ENCODE measurements at regions of chr14 and their contacts with region 1.

Region 1: DNA sequence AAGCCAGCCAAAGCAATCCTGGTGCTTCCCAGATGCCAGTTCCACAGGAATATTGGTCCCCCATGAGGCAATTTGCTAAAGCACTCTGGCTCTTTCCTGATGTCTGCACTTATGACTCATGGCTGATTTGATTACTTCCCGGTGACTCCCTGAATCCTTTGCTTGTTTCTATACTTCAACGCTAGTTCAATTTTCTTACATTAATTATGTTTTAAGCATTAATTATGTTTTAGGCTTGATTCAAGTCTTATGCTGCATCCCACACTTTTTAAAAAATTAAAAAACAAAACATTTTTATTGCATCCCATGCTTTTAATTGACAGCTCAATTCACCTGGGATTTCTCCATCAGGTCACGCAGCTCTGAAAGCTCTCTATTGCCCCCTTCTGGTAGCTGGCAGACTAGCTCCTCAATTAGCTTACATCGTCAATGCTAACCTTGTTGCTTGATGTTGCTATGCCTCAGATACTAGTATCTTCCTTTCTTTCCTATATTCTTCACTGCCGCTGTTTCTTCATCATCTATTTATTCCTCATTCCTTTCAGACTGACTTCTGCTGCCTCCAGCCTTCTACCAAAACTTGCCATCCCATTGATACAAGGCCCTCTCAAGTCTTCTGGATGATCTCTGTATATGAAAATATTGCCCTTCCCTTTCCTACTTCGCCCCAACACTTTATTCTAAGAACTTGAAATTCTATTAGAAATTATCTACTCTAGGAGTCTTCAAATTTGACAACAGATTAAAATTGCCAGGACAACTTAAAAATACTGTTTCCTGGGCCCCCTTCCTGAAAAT is 32.0 kb downstream of the TSHR start:
- DNase-seq: peak; percentile 73
- H3K4me3 ChIP-seq: no peak overlapping the region
- H3K27ac ChIP-seq: no peak overlapping the region
- H3K4me1 ChIP-seq: no peaks in the 10 kb centered on the region
- H3K27me3 ChIP-seq: peaks cover 0 to 9% of the 10 kb centered on the region in 2 experiments
- CTCF ChIP-seq: peak; percentile 76 to 89
- POLR2A ChIP-seq: no peak

Region 2: GRCh38 chr14:80862983-80863382 is 124.5 kb before region 1 on chr14:
- CTCF ChIA-PET with region 1: interaction called, 14 read pairs
- POLR2A ChIA-PET with region 1: no interaction called
- dilution Hi-C with region 1: no loop called
- intact Hi-C with region 1: no loop called
- DNase-seq: peak; percentile 12
- H3K4me3 ChIP-seq: no peak overlapping the region
- H3K27ac ChIP-seq: no peak overlapping the region
- H3K4me1 ChIP-seq: no peaks in the 10 kb centered on the region
- H3K27me3 ChIP-seq: no peaks in the 10 kb centered on the region
- CTCF ChIP-seq: peak in 1 of 2 donors; percentile 5
- POLR2A ChIP-seq: no peak

Region 3: DNA sequence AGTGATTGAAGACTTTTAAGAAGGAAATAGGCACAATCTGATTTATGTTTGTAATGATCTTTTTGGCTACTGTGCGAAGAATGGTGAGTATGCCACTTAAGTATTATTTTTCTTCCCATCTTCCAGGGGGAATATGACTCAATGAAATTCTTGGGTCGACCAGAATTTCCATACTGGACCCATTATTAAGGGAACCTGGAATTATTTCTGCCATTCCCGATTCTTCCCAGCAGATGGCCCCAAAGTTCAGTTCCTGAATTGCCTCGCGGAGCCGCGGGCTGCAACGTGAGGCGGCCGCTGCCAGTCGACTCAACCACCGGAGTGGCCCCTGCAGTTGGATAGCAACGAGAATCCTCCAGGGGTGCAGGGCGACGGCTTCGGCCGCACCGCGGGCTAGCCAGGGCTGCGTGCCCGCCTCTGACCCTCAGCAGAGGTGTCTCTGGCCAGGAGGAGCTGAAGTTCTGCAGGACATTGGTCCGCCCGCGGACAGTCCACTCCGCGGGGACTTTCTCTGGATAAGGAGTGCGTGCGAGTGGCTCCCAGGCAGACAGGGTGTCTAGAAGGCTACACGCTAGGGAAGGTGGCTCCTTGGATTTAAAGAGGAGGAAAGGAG is 32.6 kb before region 1 on chr14:
- CTCF ChIA-PET with region 1: interaction called, 99 read pairs
- POLR2A ChIA-PET with region 1: no interaction called
- dilution Hi-C with region 1: no loop called
- intact Hi-C with region 1: loop called (anchors 1 kb)
- DNase-seq: peak; percentile 80
- H3K4me3 ChIP-seq: peak overlapping the region; percentile 5 to 51 (median 14)
- H3K27ac ChIP-seq: no peak overlapping the region
- H3K4me1 ChIP-seq: peaks cover 4% of the 10 kb centered on the region
- H3K27me3 ChIP-seq: peaks cover 25 to 58% of the 10 kb centered on the region in 2 experiments
- CTCF ChIP-seq: peak; percentile 70
- POLR2A ChIP-seq: no peak

Region 4: GRCh38 chr14:80973931-80974641 is 13.3 kb before region 1 on chr14:
- CTCF ChIA-PET with region 1: interaction called, 27 read pairs
- POLR2A ChIA-PET with region 1: no interaction called
- dilution Hi-C with region 1: no loop called
- intact Hi-C with region 1: no loop called
- DNase-seq: no peak
- H3K4me3 ChIP-seq: no peak overlapping the region
- H3K27ac ChIP-seq: no peak overlapping the region
- H3K4me1 ChIP-seq: no peaks in the 10 kb centered on the region
- H3K27me3 ChIP-seq: peaks cover 0 to 4% of the 10 kb centered on the region in 2 experiments
- CTCF ChIP-seq: no peak
- POLR2A ChIP-seq: no peak

Region 5: GRCh38 chr14:81170104-81170828 is 182.8 kb after region 1 on chr14:
- CTCF ChIA-PET with region 1: interaction called, 16 read pairs
- POLR2A ChIA-PET with region 1: no interaction called
- dilution Hi-C with region 1: no loop called
- intact Hi-C with region 1: no loop called
- DNase-seq: peak; percentile 92
- H3K4me3 ChIP-seq: peak overlapping the region; percentile 33 to 72 (median 50)
- H3K27ac ChIP-seq: peak overlapping the region; percentile 77
- H3K4me1 ChIP-seq: peaks cover 12% of the 10 kb centered on the region
- H3K27me3 ChIP-seq: no peaks in the 10 kb centered on the region
- CTCF ChIP-seq: peak; percentile 76 to 88
- POLR2A ChIP-seq: peak; percentile 87

Measured in endothelial cell of umbilical vein (primary cell).